ENCODE measurements at regions of chr11 and their contacts with region 1.

Region 1: GRCh38 chr11:121012091-121012490 is 11.8 kb upstream of the TBCEL start:
- DNase-seq: peak in 1 of 2 experiments; percentile 31
- H3K4me3 ChIP-seq: no peak overlapping the region
- H3K27ac ChIP-seq: no peak overlapping the region
- H3K4me1 ChIP-seq: no peaks in the 10 kb centered on the region
- H3K27me3 ChIP-seq: peaks cover 41% of the 10 kb centered on the region
- CTCF ChIP-seq: no peak

Region 2: DNA sequence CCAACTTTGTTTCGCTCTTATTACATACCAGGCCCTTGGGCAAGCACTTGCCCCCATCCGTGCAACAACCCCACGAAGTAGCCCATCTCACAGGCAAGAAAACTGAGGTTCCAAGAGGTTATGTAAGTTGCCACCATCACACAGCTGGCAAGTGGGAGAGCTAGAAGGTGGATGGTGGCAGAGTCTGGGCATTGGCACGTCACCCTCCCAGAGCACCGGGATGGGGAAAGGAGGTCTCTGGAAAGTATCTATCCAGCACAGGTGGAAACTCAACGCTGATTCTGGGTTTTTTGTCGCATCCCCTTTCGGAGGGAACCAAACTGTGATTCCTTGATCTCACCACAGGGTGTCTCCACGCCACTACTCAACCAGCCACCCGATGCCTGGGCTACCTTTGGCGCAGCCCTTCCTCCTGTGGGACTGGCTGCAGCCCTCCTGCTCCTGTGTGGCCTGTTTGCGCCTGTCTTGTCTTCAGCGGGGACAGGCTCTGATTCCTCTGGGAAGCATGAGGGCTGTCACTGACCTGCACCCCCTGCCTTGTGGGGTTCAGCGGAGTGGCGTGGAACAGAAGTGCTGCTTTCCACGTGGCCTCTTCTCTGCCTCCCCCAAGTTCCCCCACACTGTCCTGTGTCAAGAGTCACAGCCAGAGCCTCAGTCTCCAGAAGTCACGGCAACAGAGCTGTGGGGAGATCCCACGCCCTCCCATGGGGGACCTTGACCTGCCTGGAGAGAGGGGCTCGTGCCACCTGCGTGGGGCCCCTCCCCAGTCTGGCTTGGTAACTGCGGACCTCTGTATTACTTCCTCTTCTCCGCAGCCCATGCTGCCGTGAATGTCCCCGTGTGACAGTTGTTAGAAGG is 839.8 kb before region 1 on chr11:
- CTCF ChIA-PET with region 1: no interaction called
- POLR2A ChIA-PET with region 1: no interaction called
- intact Hi-C with region 1: no loop called
- DNase-seq: peak; percentile 63 to 68
- H3K4me3 ChIP-seq: no peak overlapping the region
- H3K27ac ChIP-seq: no peak overlapping the region
- H3K4me1 ChIP-seq: no peaks in the 10 kb centered on the region
- H3K27me3 ChIP-seq: peaks cover 21% of the 10 kb centered on the region
- CTCF ChIP-seq: peak; percentile 94

Region 3: GRCh38 chr11:120977266-120978137 is 34.6 kb before region 1 on chr11:
- CTCF ChIA-PET with region 1: no interaction called
- POLR2A ChIA-PET with region 1: no interaction called
- intact Hi-C with region 1: no loop called
- DNase-seq: peak in 1 of 2 experiments; percentile 75
- H3K4me3 ChIP-seq: no peak overlapping the region
- H3K27ac ChIP-seq: no peak overlapping the region
- H3K4me1 ChIP-seq: no peaks in the 10 kb centered on the region
- H3K27me3 ChIP-seq: peaks cover 98% of the 10 kb centered on the region
- CTCF ChIP-seq: no peak

Region 4: GRCh38 chr11:122096272-122097112 is 1084.4 kb after region 1 on chr11:
- CTCF ChIA-PET with region 1: no interaction called
- POLR2A ChIA-PET with region 1: interaction called, 12 read pairs
- intact Hi-C with region 1: no loop called
- DNase-seq: no peak
- H3K4me3 ChIP-seq: no peak overlapping the region
- H3K27ac ChIP-seq: no peak overlapping the region
- H3K4me1 ChIP-seq: no peaks in the 10 kb centered on the region
- H3K27me3 ChIP-seq: no peaks in the 10 kb centered on the region
- CTCF ChIP-seq: no peak

Measured in PC-9 (cell line).